CD4-positive, alpha-beta T cell (primary cell): ENCODE measurements at regions of chr2 and their contacts with region 1.

Region 1: GRCh38 chr2:27890146-27890923 is at the starts of genes BABAM2 and RBKS:
- DNase-seq: peak; percentile 83 to 98 (median 90)
- ATAC-seq: peak; percentile 73
- H3K4me3 ChIP-seq: peak within 1 kb of the TSS; percentile 79
- H3K4me3 Mint-ChIP-seq: peak within 1 kb of the TSS; percentile 97
- H3K27ac ChIP-seq: peak within 1 kb of the TSS; percentile 96 to 99
- H3K27ac Mint-ChIP-seq: peak within 1 kb of the TSS; percentile 100
- H3K4me1 ChIP-seq: peaks cover 23% of the 10 kb centered on the region
- H3K4me1 Mint-ChIP-seq: peaks cover 59% of the 10 kb centered on the region
- H3K27me3 ChIP-seq: no peaks in the 10 kb centered on the region
- H3K27me3 Mint-ChIP-seq: peaks cover 6% of the 10 kb centered on the region
- CTCF ChIP-seq: no peak
- total RNA-seq, gene BABAM2: 29.2 to 32.8 TPM
- total RNA-seq, gene RBKS: 2.6 to 3.0 TPM

Region 2: GRCh38 chr2:26184555-26185303 is 1705.6 kb before region 1 on chr2:
- CTCF ChIA-PET with region 1: no interaction called
- POLR2A ChIA-PET with region 1: no interaction called
- intact Hi-C with region 1: loop called in 1 of 2 experiments (anchors 10 kb)
- DNase-seq: peak; percentile 81 to 96 (median 86)
- ATAC-seq: peak; percentile 99
- H3K4me3 ChIP-seq: peak overlapping the region; percentile 60
- H3K4me3 Mint-ChIP-seq: peak overlapping the region; percentile 89
- H3K27ac ChIP-seq: peak overlapping the region in 1 of 2 donors; percentile 24
- H3K27ac Mint-ChIP-seq: peak overlapping the region; percentile 71
- H3K4me1 ChIP-seq: peaks cover 26% of the 10 kb centered on the region
- H3K4me1 Mint-ChIP-seq: peaks cover 21% of the 10 kb centered on the region
- H3K27me3 ChIP-seq: peaks cover 0 to 4% of the 10 kb centered on the region in 2 experiments
- H3K27me3 Mint-ChIP-seq: peaks cover 13% of the 10 kb centered on the region
- CTCF ChIP-seq: peak; percentile 59

Region 3: GRCh38 chr2:26785431-26786206 is 1104.7 kb before region 1 on chr2 and contains the start of gene CENPA:
- CTCF ChIA-PET with region 1: no interaction called
- POLR2A ChIA-PET with region 1: no interaction called
- intact Hi-C with region 1: loop called in 1 of 2 experiments (anchors 10 kb)
- DNase-seq: peak; percentile 91 to 99 (median 93)
- ATAC-seq: peak; percentile 98
- H3K4me3 ChIP-seq: peak within 1 kb of the TSS; percentile 65
- H3K4me3 Mint-ChIP-seq: peak within 1 kb of the TSS; percentile 87
- H3K27ac ChIP-seq: peak within 1 kb of the TSS; percentile 23 to 34
- H3K27ac Mint-ChIP-seq: peak within 1 kb of the TSS; percentile 85
- H3K4me1 ChIP-seq: peaks cover 19% of the 10 kb centered on the region
- H3K4me1 Mint-ChIP-seq: peaks cover 11% of the 10 kb centered on the region
- H3K27me3 ChIP-seq: no peaks in the 10 kb centered on the region
- H3K27me3 Mint-ChIP-seq: peaks cover 26% of the 10 kb centered on the region
- CTCF ChIP-seq: peak; percentile 5
- total RNA-seq, gene CENPA: 1.0 to 1.1 TPM

Region 4: GRCh38 chr2:27086090-27086723 is 804.1 kb before region 1 on chr2:
- CTCF ChIA-PET with region 1: no interaction called
- POLR2A ChIA-PET with region 1: no interaction called
- intact Hi-C with region 1: no loop called
- DNase-seq: peak; percentile 91 to 99 (median 98)
- ATAC-seq: peak; percentile 92
- H3K4me3 ChIP-seq: peak overlapping the region; percentile 70
- H3K4me3 Mint-ChIP-seq: peak overlapping the region; percentile 91
- H3K27ac ChIP-seq: peak overlapping the region; percentile 65 to 70
- H3K27ac Mint-ChIP-seq: peak overlapping the region; percentile 81
- H3K4me1 ChIP-seq: peaks cover 50% of the 10 kb centered on the region
- H3K4me1 Mint-ChIP-seq: peaks cover 32% of the 10 kb centered on the region
- H3K27me3 ChIP-seq: no peaks in the 10 kb centered on the region
- H3K27me3 Mint-ChIP-seq: no peaks in the 10 kb centered on the region
- CTCF ChIP-seq: peak; percentile 75

Region 5: GRCh38 chr2:27303093-27304025 is 587.0 kb before region 1 on chr2:
- CTCF ChIA-PET with region 1: no interaction called
- POLR2A ChIA-PET with region 1: no interaction called
- intact Hi-C with region 1: no loop called
- DNase-seq: peak in 6 of 14 experiments; percentile 7 to 75 (median 65)
- ATAC-seq: peak; percentile 76
- H3K4me3 ChIP-seq: peak overlapping the region; percentile 39
- H3K4me3 Mint-ChIP-seq: peak overlapping the region; percentile 84
- H3K27ac ChIP-seq: no peak overlapping the region
- H3K27ac Mint-ChIP-seq: peak overlapping the region; percentile 45
- H3K4me1 ChIP-seq: peaks cover 20% of the 10 kb centered on the region
- H3K4me1 Mint-ChIP-seq: peaks cover 10% of the 10 kb centered on the region
- H3K27me3 ChIP-seq: peaks cover 23 to 26% of the 10 kb centered on the region in 2 experiments
- H3K27me3 Mint-ChIP-seq: peaks cover 44% of the 10 kb centered on the region
- CTCF ChIP-seq: peak; percentile 97

Region 6: DNA sequence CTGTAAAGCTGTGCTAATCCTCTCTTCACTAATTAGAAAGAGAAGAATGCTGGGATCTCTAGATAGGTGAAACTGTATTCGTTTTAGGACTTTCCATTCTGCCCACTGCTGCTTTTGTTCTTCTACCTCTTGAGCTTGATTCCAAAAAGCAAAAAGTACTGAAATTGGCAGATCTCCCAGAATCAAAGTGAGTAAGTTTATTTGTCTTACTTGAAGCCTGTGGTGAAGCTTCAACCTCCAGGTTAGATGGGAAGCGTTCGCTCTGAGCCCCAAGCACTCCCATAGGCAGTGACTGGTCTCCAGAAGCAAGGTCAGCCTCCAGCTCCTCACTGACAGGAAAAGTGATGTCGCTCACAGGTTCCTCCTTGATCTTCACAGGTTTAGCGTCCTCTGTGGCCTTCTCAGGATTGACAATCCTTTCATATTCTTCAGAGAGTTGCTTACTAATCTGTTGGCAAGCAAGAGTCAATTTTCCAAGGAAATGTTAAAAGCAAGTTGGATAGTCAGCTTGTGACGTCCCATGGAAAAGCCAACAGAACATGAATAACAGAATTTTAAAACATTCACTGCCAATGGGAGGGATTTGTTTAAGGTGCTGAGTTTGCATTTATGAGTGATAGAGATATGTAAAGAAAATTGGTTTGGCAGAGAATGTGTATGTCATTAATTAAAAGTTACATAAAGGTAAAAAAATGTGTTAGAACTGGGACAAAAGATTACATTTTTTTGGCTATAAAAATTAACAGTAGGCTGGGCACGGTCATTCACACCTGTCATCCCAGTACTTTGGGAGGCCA is 235.0 kb before region 1 on chr2:
- CTCF ChIA-PET with region 1: no interaction called
- POLR2A ChIA-PET with region 1: no interaction called
- intact Hi-C with region 1: no loop called
- DNase-seq: no peak
- ATAC-seq: no peak
- H3K4me3 ChIP-seq: no peak overlapping the region
- H3K4me3 Mint-ChIP-seq: no peak overlapping the region
- H3K27ac ChIP-seq: no peak overlapping the region
- H3K27ac Mint-ChIP-seq: no peak overlapping the region
- H3K4me1 ChIP-seq: no peaks in the 10 kb centered on the region
- H3K4me1 Mint-ChIP-seq: peaks cover 11% of the 10 kb centered on the region
- H3K27me3 ChIP-seq: no peaks in the 10 kb centered on the region
- H3K27me3 Mint-ChIP-seq: no peaks in the 10 kb centered on the region
- CTCF ChIP-seq: no peak

Region 7: GRCh38 chr2:27771548-27772335 is 118.6 kb before region 1 on chr2 and contains the start of gene MRPL33:
- CTCF ChIA-PET with region 1: no interaction called
- POLR2A ChIA-PET with region 1: interaction called, 5 read pairs
- intact Hi-C with region 1: loop called (anchors 2 kb)
- DNase-seq: peak; percentile 85 to 95 (median 89)
- ATAC-seq: peak; percentile 89
- H3K4me3 ChIP-seq: peak within 1 kb of the TSS; percentile 73
- H3K4me3 Mint-ChIP-seq: peak within 1 kb of the TSS; percentile 100
- H3K27ac ChIP-seq: peak within 1 kb of the TSS; percentile 74 to 91
- H3K27ac Mint-ChIP-seq: peak within 1 kb of the TSS; percentile 100
- H3K4me1 ChIP-seq: peaks cover 15% of the 10 kb centered on the region
- H3K4me1 Mint-ChIP-seq: peaks cover 59% of the 10 kb centered on the region
- H3K27me3 ChIP-seq: no peaks in the 10 kb centered on the region
- H3K27me3 Mint-ChIP-seq: no peaks in the 10 kb centered on the region
- CTCF ChIP-seq: no peak
- total RNA-seq, gene MRPL33: 33.1 to 37.2 TPM

Region 8: GRCh38 chr2:27782701-27783100 is 107.6 kb before region 1 on chr2:
- CTCF ChIA-PET with region 1: no interaction called
- POLR2A ChIA-PET with region 1: no interaction called
- intact Hi-C with region 1: no loop called
- DNase-seq: no peak
- ATAC-seq: no peak
- H3K4me3 ChIP-seq: no peak overlapping the region
- H3K4me3 Mint-ChIP-seq: no peak overlapping the region
- H3K27ac ChIP-seq: no peak overlapping the region
- H3K27ac Mint-ChIP-seq: no peak overlapping the region
- H3K4me1 ChIP-seq: no peaks in the 10 kb centered on the region
- H3K4me1 Mint-ChIP-seq: peaks cover 12% of the 10 kb centered on the region
- H3K27me3 ChIP-seq: no peaks in the 10 kb centered on the region
- H3K27me3 Mint-ChIP-seq: no peaks in the 10 kb centered on the region
- CTCF ChIP-seq: no peak

Region 9: DNA sequence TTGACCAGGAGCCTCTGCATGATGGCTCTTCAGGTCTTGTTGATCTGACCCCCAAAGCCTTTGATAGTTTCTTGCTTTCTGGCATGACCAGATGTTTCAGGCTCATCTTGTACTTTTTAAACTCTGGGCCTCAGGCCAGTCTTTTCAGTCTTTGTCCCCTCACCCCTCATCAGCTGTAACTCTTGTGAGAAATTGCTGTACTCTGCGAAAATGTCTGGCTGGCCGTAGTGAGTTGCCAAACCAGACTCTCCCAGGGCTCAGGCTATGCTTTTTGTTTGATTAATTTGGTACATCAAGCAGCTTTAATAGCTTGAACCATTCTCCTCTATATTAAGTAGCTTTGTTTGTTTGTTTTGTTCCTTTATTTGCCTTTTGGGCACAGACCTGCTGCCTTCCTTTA is 76.1 kb after region 1 on chr2:
- CTCF ChIA-PET with region 1: no interaction called
- POLR2A ChIA-PET with region 1: no interaction called
- intact Hi-C with region 1: loop called in 1 of 2 experiments (anchors 5 kb)
- DNase-seq: no peak
- ATAC-seq: no peak
- H3K4me3 ChIP-seq: no peak overlapping the region
- H3K4me3 Mint-ChIP-seq: no peak overlapping the region
- H3K27ac ChIP-seq: no peak overlapping the region
- H3K27ac Mint-ChIP-seq: peak overlapping the region; percentile 65
- H3K4me1 ChIP-seq: peaks cover 5% of the 10 kb centered on the region
- H3K4me1 Mint-ChIP-seq: peaks cover 46% of the 10 kb centered on the region
- H3K27me3 ChIP-seq: no peaks in the 10 kb centered on the region
- H3K27me3 Mint-ChIP-seq: no peaks in the 10 kb centered on the region
- CTCF ChIP-seq: no peak